MCF 10A (cell line): ENCODE measurements at regions of chrX and their contacts with region 1.

Region 1: GRCh38 chrX:109890895-109891502 is 111.9 kb upstream of the TMEM164 start:
- DNase-seq: peak; percentile 68
- H3K4me3 Mint-ChIP-seq: no peak overlapping the region
- H3K27ac Mint-ChIP-seq: no peak overlapping the region
- H3K4me1 Mint-ChIP-seq: no peaks in the 10 kb centered on the region
- H3K27me3 Mint-ChIP-seq: peaks cover 70% of the 10 kb centered on the region
- CTCF ChIP-seq: peak; percentile 82

Region 2: GRCh38 chrX:109635176-109635575 is 255.8 kb before region 1 on chrX:
- CTCF ChIA-PET with region 1: interaction called, 15 read pairs
- POLR2A ChIA-PET with region 1: no interaction called
- intact Hi-C with region 1: loop called (anchors 1 kb)
- DNase-seq: peak; percentile 31
- H3K4me3 Mint-ChIP-seq: no peak overlapping the region
- H3K27ac Mint-ChIP-seq: no peak overlapping the region
- H3K4me1 Mint-ChIP-seq: no peaks in the 10 kb centered on the region
- H3K27me3 Mint-ChIP-seq: peaks cover 23% of the 10 kb centered on the region
- CTCF ChIP-seq: no peak

Region 3: GRCh38 chrX:109720947-109721346 is 170.1 kb before region 1 on chrX:
- CTCF ChIA-PET with region 1: interaction called, 11 read pairs
- POLR2A ChIA-PET with region 1: no interaction called
- intact Hi-C with region 1: no loop called
- DNase-seq: no peak
- H3K4me3 Mint-ChIP-seq: no peak overlapping the region
- H3K27ac Mint-ChIP-seq: no peak overlapping the region
- H3K4me1 Mint-ChIP-seq: peaks cover 5% of the 10 kb centered on the region
- H3K27me3 Mint-ChIP-seq: peaks cover 35% of the 10 kb centered on the region
- CTCF ChIP-seq: no peak

Region 4: DNA sequence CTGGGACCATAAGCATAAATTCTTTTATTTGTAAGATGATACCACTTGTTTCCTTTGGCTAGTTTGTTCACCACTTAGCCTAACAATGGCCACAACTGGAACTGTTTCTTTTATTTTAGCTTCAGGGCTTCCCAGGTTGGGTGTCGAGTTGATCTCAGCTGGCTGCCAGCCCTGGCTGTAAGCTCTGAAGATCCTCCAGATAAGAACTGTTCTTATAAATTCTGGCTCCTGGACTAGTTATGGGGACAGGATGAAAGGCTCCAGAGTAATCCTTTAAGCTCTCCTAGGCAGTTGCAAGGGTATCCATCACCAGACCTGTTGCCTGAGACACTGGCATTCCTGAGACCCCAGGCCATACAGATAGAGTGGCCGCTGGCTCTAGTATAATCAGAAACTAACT is 28.6 kb before region 1 on chrX:
- CTCF ChIA-PET with region 1: interaction called, 25 read pairs
- POLR2A ChIA-PET with region 1: interaction called, 6 read pairs
- intact Hi-C with region 1: loop called (anchors 1 kb)
- DNase-seq: peak; percentile 46
- H3K4me3 Mint-ChIP-seq: no peak overlapping the region
- H3K27ac Mint-ChIP-seq: no peak overlapping the region
- H3K4me1 Mint-ChIP-seq: peaks cover 9% of the 10 kb centered on the region
- H3K27me3 Mint-ChIP-seq: peaks cover 42% of the 10 kb centered on the region
- CTCF ChIP-seq: no peak

Region 5: GRCh38 chrX:109880629-109881028 is 10.4 kb before region 1 on chrX:
- CTCF ChIA-PET with region 1: interaction called, 33 read pairs
- POLR2A ChIA-PET with region 1: interaction called, 3 read pairs
- intact Hi-C with region 1: no loop called
- DNase-seq: no peak
- H3K4me3 Mint-ChIP-seq: no peak overlapping the region
- H3K27ac Mint-ChIP-seq: no peak overlapping the region
- H3K4me1 Mint-ChIP-seq: no peaks in the 10 kb centered on the region
- H3K27me3 Mint-ChIP-seq: peaks cover 59% of the 10 kb centered on the region
- CTCF ChIP-seq: no peak

Region 6: DNA sequence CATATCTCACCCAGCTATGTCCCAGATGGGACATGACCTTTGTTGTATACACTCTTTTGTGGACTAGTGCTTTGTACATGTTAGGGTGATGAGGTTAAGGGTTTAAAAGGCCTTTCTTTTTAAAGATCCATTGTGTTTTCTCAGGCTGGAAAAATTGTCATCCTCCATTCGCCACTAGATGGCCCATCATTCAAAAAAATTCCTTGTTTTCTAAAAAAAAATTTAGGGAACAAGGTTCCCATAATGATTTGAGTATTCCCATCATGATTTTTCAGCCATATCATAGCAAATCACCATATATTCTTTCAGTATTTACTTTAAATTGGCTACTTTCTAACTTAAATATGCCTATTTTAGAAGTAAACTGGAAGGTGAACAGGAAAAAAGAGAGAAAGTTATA is 20.0 kb after region 1 on chrX:
- CTCF ChIA-PET with region 1: interaction called, 15 read pairs
- POLR2A ChIA-PET with region 1: no interaction called
- intact Hi-C with region 1: no loop called
- DNase-seq: peak; percentile 20
- H3K4me3 Mint-ChIP-seq: no peak overlapping the region
- H3K27ac Mint-ChIP-seq: no peak overlapping the region
- H3K4me1 Mint-ChIP-seq: no peaks in the 10 kb centered on the region
- H3K27me3 Mint-ChIP-seq: peaks cover 50% of the 10 kb centered on the region
- CTCF ChIP-seq: peak; percentile 45